PC-3 (cell line): ENCODE measurements at regions of chr4 and their contacts with region 1.

Region 1: GRCh38 chr4:112938461-112939058 is 110.9 kb upstream of the ANK2 start:
- DNase-seq: peak; percentile 60
- ATAC-seq: no peak
- H3K4me3 ChIP-seq: no peak overlapping the region
- H3K27ac ChIP-seq: no peak overlapping the region
- H3K4me1 ChIP-seq: no peaks in the 10 kb centered on the region
- H3K27me3 ChIP-seq: peaks cover 6% of the 10 kb centered on the region; the same call in 1 of the 2 replicates
- CTCF ChIP-seq: peak; percentile 80

Region 2: DNA sequence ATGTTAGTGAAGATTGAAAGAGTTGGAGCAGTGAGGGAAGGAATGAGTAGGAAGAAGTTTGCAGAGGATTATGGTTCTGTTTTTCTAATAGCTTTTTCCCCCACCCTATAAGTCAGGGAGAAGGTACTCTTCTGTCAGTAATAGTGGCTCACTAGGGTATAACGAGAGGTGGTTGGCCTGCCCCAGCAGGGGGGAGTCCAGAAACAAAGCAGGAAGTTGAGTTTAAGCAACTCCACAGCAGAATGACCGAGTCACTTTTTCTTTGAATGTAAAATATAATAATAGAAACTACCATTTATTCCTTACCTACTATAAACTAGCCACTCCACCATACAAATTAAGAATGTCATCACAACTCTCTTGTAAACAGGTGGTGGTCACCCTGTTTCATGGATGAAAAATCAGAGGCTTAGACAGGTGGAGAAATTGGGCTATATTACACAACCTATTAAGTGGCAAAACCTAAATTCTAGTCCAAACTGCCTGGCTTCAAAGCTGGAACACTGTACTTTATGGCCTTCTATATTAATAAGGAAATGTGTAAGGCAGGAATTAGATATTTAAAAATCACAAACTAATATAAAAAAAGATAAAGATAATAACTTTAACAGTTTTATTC is 685.1 kb before region 1 on chr4:
- CTCF ChIA-PET with region 1: no interaction called
- POLR2A ChIA-PET with region 1: no interaction called
- intact Hi-C with region 1: no loop called
- DNase-seq: no peak
- ATAC-seq: no peak
- H3K4me3 ChIP-seq: no peak overlapping the region
- H3K27ac ChIP-seq: no peak overlapping the region
- H3K4me1 ChIP-seq: no peaks in the 10 kb centered on the region
- H3K27me3 ChIP-seq: no peaks in the 10 kb centered on the region
- CTCF ChIP-seq: no peak

Region 3: DNA sequence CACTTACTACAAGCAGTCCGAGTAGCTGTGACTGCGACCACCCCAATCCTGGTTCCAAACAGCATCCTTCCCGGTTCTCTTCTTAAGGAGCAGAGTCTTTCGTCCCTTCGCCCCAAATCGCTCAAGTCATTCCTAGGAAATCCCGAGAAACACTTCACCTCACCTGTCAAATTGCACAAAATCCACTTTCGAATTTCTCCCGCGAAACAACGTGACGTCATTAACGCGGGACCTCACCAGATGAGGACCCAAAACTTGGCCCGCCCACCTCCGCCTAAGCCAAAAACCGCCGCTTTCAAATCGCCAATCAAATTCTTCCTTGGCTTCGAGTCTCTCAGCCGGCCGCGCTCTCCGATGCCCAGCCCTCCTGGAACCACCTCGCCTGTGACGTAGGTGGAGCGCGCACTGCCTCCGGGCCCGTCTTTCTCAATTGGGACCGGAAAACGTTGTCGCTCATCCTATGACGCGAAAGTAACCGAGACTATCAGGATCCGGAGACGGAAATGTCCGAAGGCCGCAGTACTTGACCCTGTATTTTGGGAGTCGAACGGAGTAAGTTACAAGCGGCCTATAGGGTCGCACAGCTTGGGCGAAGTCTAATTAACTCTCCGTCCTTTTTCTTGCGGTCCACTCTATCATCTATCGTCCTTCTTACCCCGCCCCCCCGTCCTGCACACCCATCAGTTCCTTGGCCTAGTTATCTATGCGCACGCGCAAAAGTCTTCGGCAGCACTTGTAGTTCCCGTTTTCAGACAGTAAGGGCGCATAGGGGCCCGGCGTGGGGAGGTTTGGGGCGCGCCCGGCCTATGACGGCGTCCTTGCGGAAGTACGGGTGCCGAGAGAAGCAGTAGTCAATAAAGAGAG is 301.6 kb before region 1 on chr4 and contains the starts of genes LARP7 and ZGRF1:
- CTCF ChIA-PET with region 1: no interaction called
- POLR2A ChIA-PET with region 1: no interaction called
- intact Hi-C with region 1: loop called (anchors 1 kb)
- DNase-seq: peak; percentile 97
- ATAC-seq: peak; percentile 94
- H3K4me3 ChIP-seq: peak within 1 kb of the TSS; percentile 81
- H3K27ac ChIP-seq: peak within 1 kb of the TSS; percentile 80
- H3K4me1 ChIP-seq: no peaks in the 10 kb centered on the region
- H3K27me3 ChIP-seq: no peaks in the 10 kb centered on the region
- CTCF ChIP-seq: peak; percentile 74
- total RNA-seq, gene LARP7: 13.0 and 17.1 TPM in 2 replicates
- total RNA-seq, gene ZGRF1: 7.3 and 10.0 TPM in 2 replicates

Region 4: GRCh38 chr4:112853662-112854256 is 84.8 kb before region 1 on chr4:
- CTCF ChIA-PET with region 1: no interaction called
- POLR2A ChIA-PET with region 1: no interaction called
- intact Hi-C with region 1: loop called (anchors 1 kb)
- DNase-seq: peak; percentile 8
- ATAC-seq: no peak
- H3K4me3 ChIP-seq: no peak overlapping the region
- H3K27ac ChIP-seq: no peak overlapping the region
- H3K4me1 ChIP-seq: peaks cover 9% of the 10 kb centered on the region; the same call in 1 of the 2 replicates
- H3K27me3 ChIP-seq: peaks cover 11% of the 10 kb centered on the region; the same call in 1 of the 2 replicates
- CTCF ChIP-seq: peak; percentile 64